Natural killer cell (primary cell): ENCODE measurements at regions of chr7 and their contacts with region 1.

Region 1: DNA sequence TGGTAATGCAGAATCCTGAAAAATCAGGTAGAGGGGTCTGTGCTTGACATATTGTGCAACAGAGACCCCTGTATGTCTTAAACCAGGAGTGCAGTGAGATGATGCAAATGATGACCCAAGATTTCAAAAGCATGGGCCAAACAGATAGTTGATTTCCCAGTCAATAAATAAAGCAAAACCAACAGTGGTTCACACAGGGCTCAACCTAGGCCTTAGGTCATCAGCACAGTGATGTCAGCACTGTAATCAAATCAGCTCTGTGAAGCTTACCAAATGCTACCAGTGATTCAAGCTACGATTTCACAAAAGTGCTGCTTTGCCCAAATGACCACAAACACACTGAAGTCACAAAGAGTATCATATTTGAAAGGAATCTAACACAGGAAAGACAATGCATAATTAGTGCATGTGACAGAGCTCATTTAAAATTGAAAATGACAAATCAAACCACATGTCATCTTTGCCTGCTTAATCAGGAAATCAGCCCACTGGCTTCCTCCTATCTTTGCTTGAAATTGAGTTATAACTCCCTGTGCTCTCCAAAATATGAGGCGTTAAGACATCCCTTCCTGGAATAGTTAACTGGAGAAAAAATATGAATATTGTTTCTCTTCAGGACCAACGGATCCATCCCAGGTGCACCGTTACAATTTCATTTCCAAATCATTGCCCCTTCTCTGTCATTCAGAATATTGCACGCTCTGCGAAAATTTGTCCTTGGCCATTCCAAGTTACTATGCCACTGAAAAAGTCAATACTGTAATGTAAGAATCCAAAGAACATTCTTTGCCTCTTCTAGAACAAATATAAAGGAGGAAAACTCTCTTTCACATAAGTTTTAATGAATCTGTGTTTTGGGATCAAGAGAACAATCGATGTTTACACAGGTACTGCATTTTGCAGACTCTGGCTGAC is 41.9 kb upstream of the ASL start:
- DNase-seq: peak; percentile 28 to 40
- ATAC-seq: peak; percentile 91 to 96 (median 93)
- H3K4me3 ChIP-seq: no peak overlapping the region
- H3K4me3 Mint-ChIP-seq: peak overlapping the region; percentile 66
- H3K27ac ChIP-seq: peak overlapping the region; percentile 75
- H3K27ac Mint-ChIP-seq: peak overlapping the region; percentile 82 to 96
- H3K4me1 ChIP-seq: peaks cover 6% of the 10 kb centered on the region
- H3K4me1 Mint-ChIP-seq: peaks cover 22 to 23% of the 10 kb centered on the region in 2 donors
- H3K27me3 ChIP-seq: no peaks in the 10 kb centered on the region
- H3K27me3 Mint-ChIP-seq: no peaks in the 10 kb centered on the region
- CTCF ChIP-seq: no peak

Region 2: DNA sequence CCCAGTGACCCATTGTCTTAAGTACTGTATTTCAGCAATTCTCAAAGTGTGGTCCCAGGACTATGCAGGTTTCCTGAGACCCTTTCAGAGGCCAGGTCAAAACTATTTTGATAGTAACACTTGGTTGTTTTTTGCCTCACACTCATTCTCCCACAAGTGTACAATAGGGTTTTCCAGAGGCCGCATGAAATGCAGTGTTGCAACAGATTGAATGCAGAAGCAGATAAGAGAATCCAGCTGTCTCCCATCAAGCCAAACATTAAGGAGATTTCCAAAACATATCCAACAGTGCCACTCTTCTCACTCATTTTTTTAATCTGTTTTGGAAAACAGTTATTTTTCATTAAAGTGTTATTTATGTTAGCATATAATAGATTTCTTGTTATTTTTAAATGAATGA is 140.9 kb before region 1 on chr7:
- intact Hi-C with region 1: no loop called
- DNase-seq: no peak
- ATAC-seq: no peak
- H3K4me3 ChIP-seq: no peak overlapping the region
- H3K4me3 Mint-ChIP-seq: no peak overlapping the region
- H3K27ac ChIP-seq: no peak overlapping the region
- H3K27ac Mint-ChIP-seq: no peak overlapping the region
- H3K4me1 ChIP-seq: no peaks in the 10 kb centered on the region
- H3K4me1 Mint-ChIP-seq: peaks cover 5 to 20% of the 10 kb centered on the region in 2 donors
- H3K27me3 ChIP-seq: no peaks in the 10 kb centered on the region
- H3K27me3 Mint-ChIP-seq: no peaks in the 10 kb centered on the region
- CTCF ChIP-seq: no peak

Region 3: GRCh38 chr7:65981965-65982792 is 51.5 kb before region 1 on chr7 and contains the start of gene GUSB:
- intact Hi-C with region 1: loop called (anchors 1 kb)
- DNase-seq: peak; percentile 87 to 93
- ATAC-seq: peak; percentile 70 to 83 (median 82)
- H3K4me3 ChIP-seq: peak within 1 kb of the TSS; percentile 90
- H3K4me3 Mint-ChIP-seq: peak within 1 kb of the TSS; percentile 87
- H3K27ac ChIP-seq: peak within 1 kb of the TSS; percentile 75
- H3K27ac Mint-ChIP-seq: peak within 1 kb of the TSS; percentile 88 to 94
- H3K4me1 ChIP-seq: peaks cover 24% of the 10 kb centered on the region
- H3K4me1 Mint-ChIP-seq: peaks cover 6 to 10% of the 10 kb centered on the region in 2 donors
- H3K27me3 ChIP-seq: no peaks in the 10 kb centered on the region
- H3K27me3 Mint-ChIP-seq: no peaks in the 10 kb centered on the region
- CTCF ChIP-seq: no peak
- total RNA-seq, gene GUSB: 68.8 to 94.5 (median 85.7) TPM

Region 4: GRCh38 chr7:66125052-66125708 is 91.5 kb after region 1 on chr7:
- intact Hi-C with region 1: loop called (anchors 2 kb)
- DNase-seq: peak in 1 of 2 donors; percentile 14
- ATAC-seq: peak; percentile 48 to 51 (median 50)
- H3K4me3 ChIP-seq: no peak overlapping the region
- H3K4me3 Mint-ChIP-seq: peak overlapping the region; percentile 68
- H3K27ac ChIP-seq: peak overlapping the region; percentile 85
- H3K27ac Mint-ChIP-seq: peak overlapping the region; percentile 94 to 99
- H3K4me1 ChIP-seq: peaks cover 7% of the 10 kb centered on the region
- H3K4me1 Mint-ChIP-seq: peaks cover 37 to 41% of the 10 kb centered on the region in 2 donors
- H3K27me3 ChIP-seq: no peaks in the 10 kb centered on the region
- H3K27me3 Mint-ChIP-seq: no peaks in the 10 kb centered on the region
- CTCF ChIP-seq: no peak

Region 5: DNA sequence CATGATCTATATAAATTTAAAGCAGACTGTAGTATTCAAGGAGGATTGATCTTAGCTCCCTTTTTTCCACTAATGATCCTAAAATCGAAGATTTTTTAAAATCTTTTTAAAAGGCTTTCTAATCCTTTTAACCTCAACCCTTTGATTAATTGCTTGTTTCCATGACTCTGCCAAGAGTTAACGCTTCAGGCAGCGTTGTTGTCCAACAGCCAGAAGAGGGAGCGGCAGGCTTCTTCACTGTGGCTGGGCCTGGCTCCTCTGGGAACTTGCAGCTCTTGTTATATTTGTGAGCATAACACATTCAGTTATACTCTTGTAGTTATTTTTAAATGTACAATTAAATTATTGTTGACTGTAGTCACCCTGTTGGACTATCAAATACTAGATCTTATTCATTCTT is 107.2 kb after region 1 on chr7:
- intact Hi-C with region 1: no loop called
- DNase-seq: no peak
- ATAC-seq: no peak
- H3K4me3 ChIP-seq: no peak overlapping the region
- H3K4me3 Mint-ChIP-seq: no peak overlapping the region
- H3K27ac ChIP-seq: no peak overlapping the region
- H3K27ac Mint-ChIP-seq: peak overlapping the region; percentile 5 to 65
- H3K4me1 ChIP-seq: no peaks in the 10 kb centered on the region
- H3K4me1 Mint-ChIP-seq: peaks cover 20 to 22% of the 10 kb centered on the region in 2 donors
- H3K27me3 ChIP-seq: no peaks in the 10 kb centered on the region
- H3K27me3 Mint-ChIP-seq: no peaks in the 10 kb centered on the region
- CTCF ChIP-seq: no peak

Region 6: GRCh38 chr7:66204822-66205740 is 171.4 kb after region 1 on chr7 and contains the start of gene TPST1:
- intact Hi-C with region 1: loop called (anchors 5 kb)
- DNase-seq: peak; percentile 88
- ATAC-seq: peak; percentile 88 to 92 (median 90)
- H3K4me3 ChIP-seq: peak within 1 kb of the TSS; percentile 59
- H3K4me3 Mint-ChIP-seq: peak within 1 kb of the TSS; percentile 96
- H3K27ac ChIP-seq: peak within 1 kb of the TSS; percentile 46
- H3K27ac Mint-ChIP-seq: peak within 1 kb of the TSS; percentile 84
- H3K4me1 ChIP-seq: peaks cover 16% of the 10 kb centered on the region
- H3K4me1 Mint-ChIP-seq: peaks cover 27% of the 10 kb centered on the region in 2 donors
- H3K27me3 ChIP-seq: peaks cover 2% of the 10 kb centered on the region
- H3K27me3 Mint-ChIP-seq: peaks cover 0 to 2% of the 10 kb centered on the region in 2 donors
- CTCF ChIP-seq: peak; percentile 55
- total RNA-seq, gene TPST1: 10.4 to 17.3 (median 14.3) TPM

Region 7: DNA sequence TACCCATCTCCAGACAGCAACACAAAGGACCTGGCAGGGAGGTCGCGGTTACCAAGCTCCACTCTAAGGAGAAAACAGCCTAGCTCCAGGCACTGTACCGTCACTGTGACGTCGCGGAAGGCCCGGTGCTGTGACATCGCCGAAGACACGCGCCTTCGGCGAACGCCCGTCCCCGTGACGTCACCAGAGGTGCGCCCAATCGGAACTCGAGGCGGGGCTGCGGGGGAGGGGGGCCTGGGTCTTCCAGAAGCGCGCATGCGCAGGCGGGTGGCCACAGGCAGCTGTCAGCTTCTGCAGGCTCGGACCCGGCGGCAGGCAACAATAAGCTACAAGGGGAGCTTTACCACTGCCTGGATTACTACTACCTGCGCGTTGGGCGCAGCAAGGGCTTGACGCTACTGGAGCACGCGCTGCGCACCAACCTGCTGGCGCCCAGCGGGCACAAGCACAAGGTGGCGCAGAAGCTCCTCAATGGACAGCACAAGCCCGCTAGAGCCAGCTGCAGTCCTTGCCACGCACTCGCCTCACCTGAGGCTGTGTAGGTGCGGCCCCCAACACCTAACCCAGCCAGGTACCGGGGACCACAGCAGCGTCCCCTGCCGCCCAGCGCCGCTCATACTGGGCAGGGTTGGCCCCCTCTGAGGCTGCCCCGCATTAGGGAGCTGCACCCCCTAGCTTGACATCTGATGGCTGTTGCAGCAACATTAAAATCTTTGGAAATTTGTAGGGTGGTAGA is 379.8 kb after region 1 on chr7:
- intact Hi-C with region 1: loop called (anchors 5 kb)
- DNase-seq: peak; percentile 80 to 91
- ATAC-seq: peak; percentile 92 to 96 (median 93)
- H3K4me3 ChIP-seq: peak overlapping the region; percentile 32
- H3K4me3 Mint-ChIP-seq: peak overlapping the region; percentile 79
- H3K27ac ChIP-seq: no peak overlapping the region
- H3K27ac Mint-ChIP-seq: peak overlapping the region; percentile 80 to 81
- H3K4me1 ChIP-seq: peaks cover 18% of the 10 kb centered on the region
- H3K4me1 Mint-ChIP-seq: peaks cover 0 to 11% of the 10 kb centered on the region in 2 donors
- H3K27me3 ChIP-seq: no peaks in the 10 kb centered on the region
- H3K27me3 Mint-ChIP-seq: no peaks in the 10 kb centered on the region
- CTCF ChIP-seq: peak; percentile 41

Region 8: DNA sequence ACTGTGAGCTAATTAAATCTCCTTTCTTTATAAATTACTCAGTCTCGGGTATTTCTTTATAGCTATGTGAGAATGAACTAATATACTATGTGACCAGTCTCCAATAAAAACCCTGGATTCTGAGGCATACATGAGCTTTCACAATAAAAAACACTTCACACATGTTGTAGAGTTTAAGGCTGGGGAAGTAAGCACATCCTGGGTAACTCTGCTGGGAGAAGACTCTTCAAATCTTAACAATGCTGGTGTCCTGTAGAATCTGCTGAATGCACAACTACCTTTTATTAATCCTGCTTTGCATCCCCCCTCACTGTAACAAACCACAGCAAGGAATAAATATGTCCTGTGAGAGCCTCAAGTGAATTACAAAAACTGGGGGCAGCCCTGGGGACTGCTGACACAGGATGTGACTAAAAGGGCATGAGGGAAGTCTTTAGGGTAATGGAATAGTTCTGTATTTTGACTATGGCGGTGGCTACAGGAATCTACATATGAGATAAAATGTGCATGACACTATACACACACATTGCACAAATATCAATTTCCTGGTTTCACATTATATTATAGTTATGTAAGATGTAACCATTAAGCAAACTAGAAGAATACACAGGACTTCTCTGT is 549.9 kb after region 1 on chr7:
- intact Hi-C with region 1: no loop called
- DNase-seq: no peak
- ATAC-seq: peak; percentile 38 to 46 (median 41)
- H3K4me3 ChIP-seq: no peak overlapping the region
- H3K4me3 Mint-ChIP-seq: peak overlapping the region; percentile 47
- H3K27ac ChIP-seq: no peak overlapping the region
- H3K27ac Mint-ChIP-seq: peak overlapping the region; percentile 76 to 83
- H3K4me1 ChIP-seq: no peaks in the 10 kb centered on the region
- H3K4me1 Mint-ChIP-seq: peaks cover 51 to 59% of the 10 kb centered on the region in 2 donors
- H3K27me3 ChIP-seq: no peaks in the 10 kb centered on the region
- H3K27me3 Mint-ChIP-seq: no peaks in the 10 kb centered on the region
- CTCF ChIP-seq: no peak